ENCODE measurements at regions of chr4 and their contacts with region 1.

Region 1: GRCh38 chr4:151099229-151099975 is at the start of gene RPS3A:
- DNase-seq: peak; percentile 96 to 100
- H3K4me3 ChIP-seq: peak within 1 kb of the TSS; percentile 77 to 100 (median 94)
- H3K27ac ChIP-seq: peak within 1 kb of the TSS; percentile 95
- H3K4me1 ChIP-seq: peaks cover 0 to 1% (median 0%) of the 10 kb centered on the region in 4 experiments; a peak in 1 of 7 replicates
- H3K27me3 ChIP-seq: no peaks in the 10 kb centered on the region
- CTCF ChIP-seq: peak; percentile 84 to 96 (median 84)
- EP300 ChIP-seq: peak in 1 of 2 experiments; percentile 90; a peak in 2 of 3 replicates
- POLR2A ChIP-seq: peak; percentile 99 to 100
- RAD21 ChIP-seq: peak in 1 of 2 experiments; percentile 5; a peak in 1 of 4 replicates
- total RNA-seq, gene RPS3A: 2,726 and 2,822 TPM in 2 replicates

Region 2: DNA sequence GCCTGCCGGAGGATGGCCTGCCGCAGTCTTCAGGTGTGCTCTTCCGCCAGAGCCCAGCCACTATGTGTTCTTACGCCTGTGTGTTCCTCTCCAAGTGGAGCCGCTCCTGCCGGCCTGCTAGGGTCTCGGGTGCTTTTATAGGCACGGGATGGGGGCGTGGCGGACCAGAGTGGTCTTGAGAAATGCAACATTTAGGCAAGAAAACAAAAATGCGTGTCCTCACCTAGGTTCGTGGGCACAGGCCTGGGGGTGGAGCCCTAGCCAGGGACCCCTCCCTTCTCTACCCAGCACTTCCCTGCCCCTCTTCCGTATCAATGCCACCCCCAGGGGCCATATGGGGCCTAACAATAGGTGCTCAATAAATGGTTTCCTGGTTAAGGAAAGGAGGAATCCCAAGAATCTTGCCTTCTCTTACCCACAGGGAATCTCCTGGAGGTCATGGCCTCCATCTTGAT is 49.9 kb before region 1 on chr4:
- CTCF ChIA-PET with region 1: no interaction called
- POLR2A ChIA-PET with region 1: interaction called, 15 read pairs
- DNase-seq: peak; percentile 77 to 89
- H3K4me3 ChIP-seq: peak overlapping the region; percentile 28 to 58 (median 36); a peak in 6 of 8 replicates
- H3K27ac ChIP-seq: peak overlapping the region; percentile 60; the same call in 1 of the 2 replicates
- H3K4me1 ChIP-seq: peaks cover 4 to 7% (median 4%) of the 10 kb centered on the region in 4 experiments; a peak in 5 of 7 replicates
- H3K27me3 ChIP-seq: no peaks in the 10 kb centered on the region
- CTCF ChIP-seq: no peak
- EP300 ChIP-seq: peak in 1 of 2 experiments; percentile 76; a peak in 1 of 3 replicates
- POLR2A ChIP-seq: peak; percentile 94 to 97
- RAD21 ChIP-seq: no peak

Region 3: DNA sequence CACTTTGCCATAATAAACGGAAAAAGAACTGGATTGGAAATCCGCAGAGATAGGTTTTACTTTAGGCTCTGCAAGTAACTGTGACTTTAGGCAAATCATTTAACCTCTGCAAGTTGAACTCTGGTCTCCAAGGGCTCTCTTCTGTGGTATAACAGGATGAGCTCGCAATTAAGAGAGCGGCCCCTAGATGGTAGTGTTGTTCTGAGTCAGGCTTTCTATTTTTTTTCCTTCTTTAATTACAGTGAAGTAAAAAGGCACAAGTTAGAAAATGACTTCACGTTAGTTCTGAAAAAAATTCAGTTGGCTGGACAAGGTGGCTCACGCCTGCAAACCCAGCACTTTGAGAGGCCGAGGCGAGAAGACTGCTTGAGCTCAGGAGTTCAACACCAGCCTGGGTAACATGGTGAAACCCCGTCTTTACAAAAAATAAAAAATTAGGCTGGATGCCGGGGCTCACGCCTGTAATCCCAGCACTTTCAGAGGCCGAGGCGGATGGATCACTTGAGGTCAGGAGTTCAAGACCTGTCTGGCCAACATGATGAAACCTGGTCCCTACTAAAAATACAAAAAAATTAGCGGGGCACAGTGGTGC is 18.1 kb after region 1 on chr4:
- CTCF ChIA-PET with region 1: interaction called, 9 read pairs
- POLR2A ChIA-PET with region 1: interaction called, 145 read pairs
- DNase-seq: peak in 1 of 2 experiments; percentile 78
- H3K4me3 ChIP-seq: no peak overlapping the region
- H3K27ac ChIP-seq: no peak overlapping the region
- H3K4me1 ChIP-seq: no peaks in the 10 kb centered on the region
- H3K27me3 ChIP-seq: no peaks in the 10 kb centered on the region
- CTCF ChIP-seq: peak in 2 of 3 experiments; percentile 56 to 67; a peak in 2 of 4 replicates
- EP300 ChIP-seq: no peak
- POLR2A ChIP-seq: no peak
- RAD21 ChIP-seq: peak; percentile 87 to 88

Region 4: DNA sequence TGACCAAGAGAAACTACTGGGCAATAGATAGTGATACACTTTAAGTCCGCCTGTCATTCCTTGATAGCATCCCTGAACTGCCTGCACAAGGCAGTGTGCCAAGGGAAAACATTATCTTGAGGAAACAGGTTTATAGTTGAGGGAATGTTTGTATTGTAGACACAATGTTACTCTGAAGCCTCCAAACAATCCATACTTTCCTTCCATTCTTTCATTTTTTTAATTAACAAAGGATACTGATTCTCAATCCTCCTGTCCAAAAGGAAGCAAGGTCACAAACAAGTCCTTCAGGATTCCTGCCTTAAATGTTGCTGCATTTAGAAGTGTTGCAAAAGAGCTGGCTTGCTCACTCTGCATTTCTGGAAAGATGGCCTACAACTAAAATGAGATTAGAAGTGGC is 115.9 kb after region 1 on chr4:
- CTCF ChIA-PET with region 1: no interaction called
- POLR2A ChIA-PET with region 1: no interaction called
- DNase-seq: no peak
- H3K4me3 ChIP-seq: no peak overlapping the region
- H3K27ac ChIP-seq: no peak overlapping the region
- H3K4me1 ChIP-seq: peaks cover 0 to 2% (median 0%) of the 10 kb centered on the region in 4 experiments; a peak in 1 of 7 replicates
- H3K27me3 ChIP-seq: no peaks in the 10 kb centered on the region
- CTCF ChIP-seq: no peak
- EP300 ChIP-seq: no peak
- POLR2A ChIP-seq: no peak
- RAD21 ChIP-seq: no peak